HepG2 (cell line): ENCODE measurements at regions of chr10 and their contacts with region 1.

Region 1: GRCh38 chr10:73625884-73626752 is 15.2 kb downstream of the MYOZ1 start:
- DNase-seq: peak; percentile 96
- ATAC-seq: peak; percentile 96
- H3K4me3 ChIP-seq: peak overlapping the region; percentile 75 to 92 (median 89)
- H3K27ac ChIP-seq: peak overlapping the region; percentile 84
- H3K4me1 ChIP-seq: peaks cover 39% of the 10 kb centered on the region
- H3K27me3 ChIP-seq: no peaks in the 10 kb centered on the region; a peak in 1 of 5 replicates
- CTCF ChIP-seq: no peak
- EP300 ChIP-seq: no peak; a peak in 1 of 4 replicates
- POLR2A ChIP-seq: peak; percentile 83 to 89
- RAD21 ChIP-seq: 0 out of 2 replicates have a peak, but pooled peaks have one; percentile 35

Region 2: DNA sequence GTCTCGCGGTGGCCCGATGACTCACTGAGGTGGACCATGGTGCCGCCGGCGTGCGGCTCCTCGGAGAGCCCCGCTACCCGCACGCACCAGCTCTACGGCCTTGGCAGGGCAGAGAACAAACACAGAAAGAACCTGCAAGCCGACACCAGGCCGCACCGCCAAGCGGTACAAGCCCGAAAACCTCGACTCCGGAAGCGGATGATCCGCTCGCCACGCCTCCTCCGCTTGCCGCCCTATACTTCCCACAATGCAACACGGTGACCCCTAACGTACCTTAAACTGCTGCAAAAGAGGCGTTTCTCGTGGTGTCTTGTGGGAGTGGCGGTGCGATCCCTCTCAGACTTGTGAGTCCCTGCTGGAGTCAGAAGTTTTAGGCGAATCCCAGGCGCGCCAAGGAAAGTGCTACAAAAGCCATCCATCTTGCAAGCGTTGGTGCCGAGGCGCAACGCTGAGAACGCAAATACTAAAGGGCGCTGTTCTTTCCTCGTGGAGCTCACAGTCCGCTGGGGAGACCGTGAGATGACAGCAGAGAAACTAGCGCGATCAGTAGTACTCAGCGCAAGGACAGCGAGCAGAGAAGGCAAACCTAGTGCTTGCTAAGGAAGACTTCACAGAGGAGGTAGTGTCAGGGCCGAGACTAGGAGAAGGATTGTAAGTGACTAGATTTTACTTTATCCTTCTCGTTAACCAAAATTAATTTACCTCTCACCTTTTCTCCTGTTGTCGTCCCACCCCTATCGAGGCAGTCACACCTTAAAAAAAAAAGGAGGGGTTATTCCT is 373.5 kb before region 1 on chr10 and contains the start of gene MRPS16:
- CTCF ChIA-PET with region 1: no interaction called
- POLR2A ChIA-PET with region 1: no interaction called
- in situ Hi-C with region 1: loop called (anchors 25 kb)
- intact Hi-C with region 1: no loop called
- DNase-seq: peak; percentile 95
- ATAC-seq: peak; percentile 87
- H3K4me3 ChIP-seq: peak within 1 kb of the TSS; percentile 78 to 92 (median 84)
- H3K27ac ChIP-seq: peak within 1 kb of the TSS; percentile 88
- H3K4me1 ChIP-seq: peaks cover 33% of the 10 kb centered on the region
- H3K27me3 ChIP-seq: no peaks in the 10 kb centered on the region; a peak in 1 of 5 replicates
- CTCF ChIP-seq: no peak
- EP300 ChIP-seq: peak in 1 of 2 experiments; percentile 46; a peak in 2 of 4 replicates
- POLR2A ChIP-seq: peak; percentile 74 to 90
- RAD21 ChIP-seq: peak; percentile 40; the same call in 1 of the 2 replicates
- total RNA-seq, gene MRPS16: 135 and 189 TPM in 2 replicates

Region 3: DNA sequence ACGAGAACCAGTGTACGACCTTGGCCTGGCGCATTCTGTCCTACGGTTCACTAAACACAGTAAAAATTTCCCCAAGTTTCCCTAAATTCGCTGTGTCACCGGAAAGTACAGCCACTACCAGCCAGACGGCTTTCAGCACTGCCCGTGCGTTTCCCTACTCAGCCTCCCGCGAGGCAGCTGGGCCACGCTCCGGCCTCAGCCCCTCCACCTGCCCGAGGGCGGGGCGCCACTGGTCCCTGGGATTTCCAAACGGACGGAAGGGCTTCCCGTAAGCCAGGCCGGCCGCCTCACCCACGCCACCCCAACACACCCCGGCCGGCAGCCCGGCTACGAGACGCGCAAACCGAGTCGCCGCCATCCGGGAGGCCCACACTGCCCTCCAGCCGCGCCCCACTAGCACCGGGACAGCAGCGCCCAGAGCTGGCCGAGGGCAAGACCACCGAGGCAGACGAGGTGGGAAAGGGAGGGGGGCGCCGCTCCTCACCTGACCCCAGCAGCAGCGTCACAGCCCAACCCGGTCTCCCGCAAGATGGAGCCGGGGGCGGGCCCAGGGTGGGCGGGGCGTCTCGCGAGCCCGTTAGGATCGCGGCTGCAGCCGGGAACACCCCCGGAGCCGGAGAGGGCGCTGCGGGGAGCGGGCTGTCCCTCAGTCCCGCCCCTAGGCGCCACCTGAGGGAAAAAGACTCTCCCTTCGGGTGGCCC is 212.4 kb before region 1 on chr10 and contains the start of gene ANXA7:
- CTCF ChIA-PET with region 1: no interaction called
- POLR2A ChIA-PET with region 1: no interaction called
- in situ Hi-C with region 1: no loop called
- intact Hi-C with region 1: loop called (anchors 5 kb)
- DNase-seq: peak; percentile 81
- ATAC-seq: peak; percentile 95
- H3K4me3 ChIP-seq: peak within 1 kb of the TSS; percentile 64 to 100 (median 89)
- H3K27ac ChIP-seq: peak within 1 kb of the TSS; percentile 99
- H3K4me1 ChIP-seq: peaks cover 65% of the 10 kb centered on the region
- H3K27me3 ChIP-seq: no peaks in the 10 kb centered on the region; a peak in 1 of 5 replicates
- CTCF ChIP-seq: peak; percentile 51
- EP300 ChIP-seq: no peak
- POLR2A ChIP-seq: peak; percentile 61 to 83
- RAD21 ChIP-seq: no peak
- total RNA-seq, gene ANXA7: 89.0 and 139 TPM in 2 replicates

Region 4: DNA sequence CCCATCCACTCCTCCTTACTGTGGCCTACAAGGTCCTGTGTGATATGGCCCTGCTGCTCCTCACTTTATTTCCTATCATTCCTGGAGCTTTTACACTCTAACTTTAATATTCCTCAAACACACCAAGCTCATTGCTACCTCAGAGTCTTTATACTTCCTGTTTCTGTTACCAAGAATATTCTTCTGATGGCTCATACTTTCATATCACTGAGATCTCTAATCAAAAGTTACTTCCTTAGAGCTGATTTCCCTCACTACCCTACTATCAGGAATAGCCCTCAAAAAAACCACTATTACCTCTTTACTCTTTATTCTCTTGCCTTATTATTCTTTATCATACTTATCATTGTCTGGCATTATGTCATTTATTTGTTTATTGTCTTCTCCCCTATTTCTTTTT is 124.5 kb before region 1 on chr10:
- CTCF ChIA-PET with region 1: no interaction called
- POLR2A ChIA-PET with region 1: no interaction called
- in situ Hi-C with region 1: no loop called
- intact Hi-C with region 1: no loop called
- DNase-seq: no peak
- ATAC-seq: no peak
- H3K4me3 ChIP-seq: no peak overlapping the region
- H3K27ac ChIP-seq: no peak overlapping the region
- H3K4me1 ChIP-seq: peaks cover 11% of the 10 kb centered on the region
- H3K27me3 ChIP-seq: no peaks in the 10 kb centered on the region
- CTCF ChIP-seq: no peak
- EP300 ChIP-seq: no peak
- POLR2A ChIP-seq: no peak
- RAD21 ChIP-seq: no peak

Region 5: GRCh38 chr10:73586583-73586984 is 39.5 kb before region 1 on chr10:
- CTCF ChIA-PET with region 1: no interaction called
- POLR2A ChIA-PET with region 1: interaction called, 13 read pairs
- in situ Hi-C with region 1: no loop called
- intact Hi-C with region 1: loop called (anchors 2 kb)
- DNase-seq: peak; percentile 93
- ATAC-seq: peak; percentile 83
- H3K4me3 ChIP-seq: peak overlapping the region in 2 of 3 experiments; percentile 25 to 39; a peak in 3 of 6 replicates
- H3K27ac ChIP-seq: peak overlapping the region; percentile 68
- H3K4me1 ChIP-seq: peaks cover 83% of the 10 kb centered on the region
- H3K27me3 ChIP-seq: no peaks in the 10 kb centered on the region; a peak in 1 of 5 replicates
- CTCF ChIP-seq: no peak
- EP300 ChIP-seq: peak in 1 of 2 experiments; percentile 92; a peak in 2 of 4 replicates
- POLR2A ChIP-seq: no peak
- RAD21 ChIP-seq: no peak

Region 6: DNA sequence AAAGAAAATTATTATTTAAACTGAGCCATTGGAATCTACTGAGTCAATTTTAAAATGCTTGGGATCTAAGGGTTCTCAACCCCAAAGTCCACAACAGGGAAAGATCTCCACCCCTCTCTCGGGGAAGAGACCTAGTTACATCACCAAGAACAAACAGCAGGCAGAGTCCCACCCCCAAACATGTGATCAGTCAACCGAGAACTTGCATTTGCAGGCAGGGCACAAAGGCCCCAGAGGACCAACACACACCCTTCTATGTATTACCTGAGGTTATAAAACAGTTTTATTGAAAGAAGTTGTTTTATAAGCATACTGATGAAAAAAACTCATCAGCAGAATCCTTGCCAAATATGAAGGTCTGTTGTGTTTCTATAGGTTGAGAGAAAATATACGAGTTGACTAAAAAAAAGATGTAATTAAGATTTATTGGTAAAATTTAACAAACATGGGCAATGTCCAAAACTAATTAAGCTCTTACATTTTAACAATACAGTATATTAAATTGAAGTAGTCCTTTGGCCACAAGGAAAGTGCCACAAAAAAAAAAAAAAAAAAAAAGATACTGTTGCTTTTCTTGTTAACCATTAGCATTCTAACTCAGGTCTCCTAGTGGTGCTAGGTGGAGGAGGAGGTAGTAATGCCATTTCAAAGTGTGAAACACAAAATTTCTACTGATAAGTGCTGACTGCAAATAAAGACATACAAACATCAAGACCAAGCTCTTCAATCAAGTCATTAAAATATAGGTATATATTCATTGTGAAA is 34.0 kb before region 1 on chr10:
- CTCF ChIA-PET with region 1: no interaction called
- POLR2A ChIA-PET with region 1: interaction called, 13 read pairs
- in situ Hi-C with region 1: no loop called
- intact Hi-C with region 1: loop called (anchors 2 kb)
- DNase-seq: peak; percentile 95
- ATAC-seq: peak; percentile 95
- H3K4me3 ChIP-seq: peak overlapping the region; percentile 34 to 62 (median 61); a peak in 4 of 6 replicates
- H3K27ac ChIP-seq: peak overlapping the region; percentile 84
- H3K4me1 ChIP-seq: peaks cover 71% of the 10 kb centered on the region
- H3K27me3 ChIP-seq: no peaks in the 10 kb centered on the region; a peak in 1 of 5 replicates
- CTCF ChIP-seq: no peak
- EP300 ChIP-seq: peak in 1 of 2 experiments; percentile 84; a peak in 2 of 4 replicates
- POLR2A ChIP-seq: no peak
- RAD21 ChIP-seq: no peak

Region 7: GRCh38 chr10:73601486-73601921 is 24.6 kb before region 1 on chr10:
- CTCF ChIA-PET with region 1: no interaction called
- POLR2A ChIA-PET with region 1: interaction called, 11 read pairs
- in situ Hi-C with region 1: no loop called
- intact Hi-C with region 1: no loop called
- DNase-seq: no peak
- ATAC-seq: peak; percentile 62
- H3K4me3 ChIP-seq: no peak overlapping the region
- H3K27ac ChIP-seq: no peak overlapping the region
- H3K4me1 ChIP-seq: peaks cover 16% of the 10 kb centered on the region
- H3K27me3 ChIP-seq: no peaks in the 10 kb centered on the region
- CTCF ChIP-seq: no peak
- EP300 ChIP-seq: no peak
- POLR2A ChIP-seq: no peak
- RAD21 ChIP-seq: no peak

Region 8: DNA sequence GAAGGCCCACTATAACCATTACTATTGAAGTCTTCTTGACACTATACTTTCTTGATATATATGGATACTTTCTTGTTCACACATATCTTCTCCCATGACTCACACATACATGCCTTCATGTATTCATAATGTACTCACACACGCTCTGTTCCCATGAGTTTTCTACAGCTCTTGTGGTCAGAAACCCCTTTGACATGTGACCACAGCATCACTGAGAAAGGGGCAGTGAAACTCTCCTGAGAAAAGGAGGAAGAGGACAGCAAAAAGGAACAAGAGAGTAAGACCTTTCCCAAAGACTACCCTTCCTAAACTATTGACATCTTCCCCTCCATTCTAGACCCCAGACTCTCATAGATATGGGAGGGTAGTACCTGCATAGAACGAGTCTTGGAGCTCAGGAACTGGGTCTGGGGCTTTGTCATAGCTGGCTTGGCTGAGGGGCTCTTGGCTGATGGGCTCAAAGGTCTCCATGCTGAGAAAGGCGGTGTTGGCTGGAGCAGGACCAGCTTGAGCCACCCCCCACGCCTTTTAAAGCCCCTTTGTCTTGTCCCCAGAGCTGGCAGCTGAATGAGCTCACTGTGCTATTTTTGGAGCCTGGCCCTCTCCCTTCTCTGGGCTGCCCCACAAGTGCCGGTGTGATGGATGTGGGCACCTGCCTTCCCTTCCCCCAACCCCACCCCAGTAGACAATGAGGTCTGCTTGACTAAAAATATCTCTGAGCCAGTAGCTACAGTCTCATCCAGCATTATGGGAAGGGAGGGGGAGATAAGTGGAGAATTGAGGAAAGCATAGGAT is 24.6 kb after region 1 on chr10:
- CTCF ChIA-PET with region 1: no interaction called
- POLR2A ChIA-PET with region 1: no interaction called
- in situ Hi-C with region 1: no loop called
- intact Hi-C with region 1: no loop called
- DNase-seq: no peak
- ATAC-seq: no peak
- H3K4me3 ChIP-seq: no peak overlapping the region
- H3K27ac ChIP-seq: no peak overlapping the region
- H3K4me1 ChIP-seq: peaks cover 27% of the 10 kb centered on the region
- H3K27me3 ChIP-seq: peaks cover 3 to 6% of the 10 kb centered on the region in 2 experiments; a peak in 1 of 5 replicates
- CTCF ChIP-seq: no peak
- EP300 ChIP-seq: no peak
- POLR2A ChIP-seq: no peak
- RAD21 ChIP-seq: no peak